Spleen (tissue), 13 donors: ENCODE measurements at regions of chr9 and their contacts with region 1.

Region 1: DNA sequence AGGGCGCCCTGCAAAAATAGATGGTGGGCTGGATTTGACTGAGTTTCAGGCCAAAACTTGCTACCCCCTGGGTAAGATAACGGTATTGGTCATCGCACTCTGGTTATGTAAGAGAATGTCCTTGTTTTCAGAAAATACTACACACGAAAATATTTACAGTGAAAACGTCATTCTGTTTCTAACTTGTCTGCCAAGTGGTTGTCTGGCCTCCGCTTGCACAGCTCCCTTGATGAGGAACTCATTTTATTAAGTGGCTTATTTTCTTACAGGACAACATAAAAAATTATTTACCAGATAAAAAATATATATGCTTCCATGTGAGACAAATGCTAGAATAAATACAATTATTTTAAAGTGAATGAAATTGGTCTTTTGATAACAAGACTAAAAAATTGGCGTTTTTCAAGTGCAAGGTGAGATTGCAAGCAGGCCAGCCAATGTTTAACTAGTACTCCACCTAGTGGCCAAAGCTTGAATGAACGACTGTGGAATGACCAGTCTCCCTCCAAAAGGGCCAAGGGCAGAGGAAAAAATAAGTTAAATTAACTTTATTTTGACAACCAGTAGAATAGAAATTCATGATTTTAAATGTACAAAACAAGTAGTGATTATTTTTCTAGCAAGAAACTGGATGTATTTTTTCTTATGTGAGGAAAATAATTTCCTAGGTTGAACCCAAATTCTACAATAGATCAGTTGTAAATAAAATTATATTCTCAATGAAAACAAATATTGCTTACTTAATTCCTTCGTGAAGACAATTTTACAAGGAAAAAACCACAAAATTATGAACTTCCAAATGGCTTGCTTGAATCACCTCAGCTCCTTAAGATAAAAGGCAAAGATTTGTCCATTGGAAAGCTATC is 93.2 kb downstream of the ZFAND5 start:
- DNase-seq: no peak
- H3K4me3 ChIP-seq: no peak overlapping the region
- H3K27ac ChIP-seq: no peak overlapping the region
- H3K4me1 ChIP-seq: no peaks in the 10 kb centered on the region
- H3K27me3 ChIP-seq: no peaks in the 10 kb centered on the region
- CTCF ChIP-seq: peak; percentile 39 to 85 (median 78)
- POLR2A ChIP-seq: no peak

Region 2: DNA sequence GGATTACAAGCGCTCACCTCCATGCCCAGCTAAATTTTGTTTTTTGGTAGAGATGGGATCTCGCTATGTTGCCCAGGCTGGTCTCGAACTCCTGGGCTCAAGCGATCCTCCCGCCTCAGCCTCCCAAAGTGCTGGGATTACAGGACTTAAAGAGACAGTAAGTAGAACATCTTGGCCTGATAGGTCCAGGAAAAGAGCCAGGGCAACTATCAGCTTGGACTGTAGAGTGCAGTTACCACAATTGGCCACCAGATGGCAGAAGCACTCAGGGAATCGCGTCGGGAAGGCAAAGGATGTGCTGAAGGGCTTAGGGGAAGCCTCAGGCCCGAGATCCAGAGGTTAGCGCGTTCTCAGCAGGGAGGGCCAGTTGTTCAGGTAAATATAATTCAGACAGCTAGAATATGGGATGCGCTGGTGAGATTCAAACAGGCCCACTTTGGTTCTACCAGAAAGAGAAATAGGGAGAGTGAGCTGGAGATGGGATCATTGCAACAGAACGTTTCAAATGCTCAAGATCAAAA is 232.9 kb before region 1 on chr9:
- intact Hi-C with region 1: loop called (anchors 5 kb)
- DNase-seq: peak; percentile 82
- H3K4me3 ChIP-seq: no peak overlapping the region
- H3K27ac ChIP-seq: no peak overlapping the region
- H3K4me1 ChIP-seq: peaks cover 0 to 6% (median 0%) of the 10 kb centered on the region in 6 donors
- H3K27me3 ChIP-seq: no peaks in the 10 kb centered on the region
- CTCF ChIP-seq: peak; percentile 87 to 95 (median 92)
- POLR2A ChIP-seq: no peak